CD8-positive, alpha-beta T cell (primary cell): ENCODE measurements at regions of chr17 and their contacts with region 1.

Region 1: GRCh38 chr17:4733073-4733531 is 1.9 kb downstream of the MED11 start:
- DNase-seq: peak in 1 of 9 experiments; percentile 45
- ATAC-seq: no peak
- H3K4me3 ChIP-seq: no peak overlapping the region
- H3K4me3 Mint-ChIP-seq: peak overlapping the region; percentile 39
- H3K27ac ChIP-seq: no peak overlapping the region
- H3K27ac Mint-ChIP-seq: no peak overlapping the region
- H3K4me1 ChIP-seq: peaks cover 24% of the 10 kb centered on the region
- H3K4me1 Mint-ChIP-seq: peaks cover 30% of the 10 kb centered on the region
- H3K27me3 ChIP-seq: no peaks in the 10 kb centered on the region
- H3K27me3 Mint-ChIP-seq: no peaks in the 10 kb centered on the region
- CTCF ChIP-seq: no peak

Region 2: GRCh38 chr17:4444782-4445473 is 288.2 kb before region 1 on chr17:
- CTCF ChIA-PET with region 1: no interaction called
- POLR2A ChIA-PET with region 1: no interaction called
- intact Hi-C with region 1: no loop called
- DNase-seq: no peak
- ATAC-seq: no peak
- H3K4me3 ChIP-seq: no peak overlapping the region
- H3K4me3 Mint-ChIP-seq: no peak overlapping the region
- H3K27ac ChIP-seq: no peak overlapping the region
- H3K27ac Mint-ChIP-seq: no peak overlapping the region
- H3K4me1 ChIP-seq: no peaks in the 10 kb centered on the region
- H3K4me1 Mint-ChIP-seq: no peaks in the 10 kb centered on the region
- H3K27me3 ChIP-seq: peaks cover 0 to 2% of the 10 kb centered on the region in 2 experiments
- H3K27me3 Mint-ChIP-seq: no peaks in the 10 kb centered on the region
- CTCF ChIP-seq: no peak

Region 3: DNA sequence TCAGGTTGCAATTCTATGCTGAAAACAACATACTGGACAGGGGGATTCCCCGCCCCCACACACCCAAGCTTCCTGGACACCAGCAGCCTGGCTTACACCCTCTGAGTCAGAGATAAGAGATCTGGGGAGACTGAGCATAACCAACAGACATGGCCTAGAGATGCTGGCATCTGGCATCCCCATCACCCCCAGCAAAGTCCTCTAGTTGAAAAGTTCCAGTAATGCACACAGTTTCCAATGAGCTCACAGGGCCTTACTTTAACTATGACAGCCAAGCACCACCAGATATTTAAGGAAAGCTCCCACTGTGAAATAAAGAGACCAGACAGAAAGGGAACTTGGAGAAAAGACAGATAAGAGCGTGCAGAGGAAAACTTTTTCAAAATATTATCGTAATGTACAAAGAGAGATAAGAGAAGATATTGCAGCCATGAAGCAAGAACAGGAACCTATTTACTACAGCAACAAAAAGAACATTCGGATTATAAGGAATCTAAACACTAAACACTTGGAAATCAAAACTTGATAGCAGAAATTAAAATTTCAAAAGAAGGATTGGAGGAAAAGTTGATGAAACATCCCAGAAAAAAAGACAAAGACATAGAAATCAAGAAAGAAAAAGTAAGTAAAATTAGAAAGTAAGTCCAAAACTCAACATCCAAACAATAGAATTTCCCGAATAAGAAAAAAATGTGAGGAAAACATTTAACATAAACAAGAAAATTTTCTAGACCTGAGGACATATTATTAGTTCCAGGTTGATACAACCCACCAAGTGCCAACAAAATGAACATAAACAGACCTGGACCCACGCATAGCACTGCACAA is 74.4 kb before region 1 on chr17:
- CTCF ChIA-PET with region 1: no interaction called
- POLR2A ChIA-PET with region 1: no interaction called
- intact Hi-C with region 1: no loop called
- DNase-seq: no peak
- ATAC-seq: no peak
- H3K4me3 ChIP-seq: no peak overlapping the region
- H3K4me3 Mint-ChIP-seq: no peak overlapping the region
- H3K27ac ChIP-seq: no peak overlapping the region
- H3K27ac Mint-ChIP-seq: no peak overlapping the region
- H3K4me1 ChIP-seq: no peaks in the 10 kb centered on the region
- H3K4me1 Mint-ChIP-seq: no peaks in the 10 kb centered on the region
- H3K27me3 ChIP-seq: no peaks in the 10 kb centered on the region
- H3K27me3 Mint-ChIP-seq: peaks cover 5% of the 10 kb centered on the region
- CTCF ChIP-seq: no peak

Region 4: GRCh38 chr17:4796553-4796921 is 63.4 kb after region 1 on chr17:
- CTCF ChIA-PET with region 1: interaction called, 4 read pairs
- POLR2A ChIA-PET with region 1: no interaction called
- intact Hi-C with region 1: loop called (anchors 1 kb)
- DNase-seq: peak in 2 of 9 experiments; percentile 20 to 28
- ATAC-seq: no peak
- H3K4me3 ChIP-seq: peak overlapping the region; percentile 70 to 73
- H3K4me3 Mint-ChIP-seq: peak overlapping the region; percentile 99
- H3K27ac ChIP-seq: peak overlapping the region; percentile 53 to 67
- H3K27ac Mint-ChIP-seq: peak overlapping the region; percentile 97
- H3K4me1 ChIP-seq: peaks cover 7% of the 10 kb centered on the region
- H3K4me1 Mint-ChIP-seq: peaks cover 13% of the 10 kb centered on the region
- H3K27me3 ChIP-seq: no peaks in the 10 kb centered on the region
- H3K27me3 Mint-ChIP-seq: peaks cover 2% of the 10 kb centered on the region
- CTCF ChIP-seq: no peak

Region 5: DNA sequence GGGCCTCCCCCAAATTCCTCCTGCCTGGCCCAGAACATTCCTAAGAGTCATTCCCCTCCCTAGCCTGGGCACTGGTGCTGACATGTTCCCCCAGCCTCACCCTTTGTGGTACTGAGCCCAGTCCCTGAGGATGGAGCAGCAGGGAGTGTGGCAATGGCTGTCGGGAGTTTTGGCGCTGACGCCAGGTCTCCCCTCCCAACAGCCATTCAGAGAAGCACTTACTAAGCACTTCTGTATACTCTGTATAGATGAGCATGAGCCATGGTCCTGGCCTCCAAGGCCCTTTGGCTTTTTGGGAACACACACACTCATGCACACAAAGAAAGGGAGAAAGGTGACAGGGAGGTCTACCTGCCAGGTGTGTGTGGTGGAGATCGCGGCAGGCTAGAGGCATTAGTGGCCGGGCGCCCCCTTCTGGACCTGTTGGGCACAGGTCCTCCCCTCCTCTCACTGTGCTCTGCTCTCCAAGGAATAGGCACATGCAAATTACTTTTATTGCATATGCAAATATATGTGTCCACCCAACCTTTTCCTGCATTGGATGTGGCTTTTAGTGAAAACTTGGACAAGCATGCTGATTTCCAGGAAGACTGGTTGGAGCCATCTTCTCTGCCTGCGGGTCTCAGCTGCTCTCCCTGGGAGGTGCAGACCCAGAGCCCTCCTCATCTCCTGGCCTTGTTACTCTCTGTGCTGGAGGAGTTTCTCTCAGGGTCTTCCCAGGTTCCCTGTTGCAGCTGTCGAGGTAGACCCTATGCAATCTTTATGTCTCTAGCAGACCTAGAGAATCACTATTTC is 148.9 kb after region 1 on chr17:
- CTCF ChIA-PET with region 1: interaction called, 15 read pairs
- POLR2A ChIA-PET with region 1: interaction called, 3 read pairs
- intact Hi-C with region 1: loop called (anchors 1 kb)
- DNase-seq: peak; percentile 43 to 83 (median 72)
- ATAC-seq: peak; percentile 98
- H3K4me3 ChIP-seq: no peak overlapping the region
- H3K4me3 Mint-ChIP-seq: no peak overlapping the region
- H3K27ac ChIP-seq: no peak overlapping the region
- H3K27ac Mint-ChIP-seq: no peak overlapping the region
- H3K4me1 ChIP-seq: no peaks in the 10 kb centered on the region
- H3K4me1 Mint-ChIP-seq: peaks cover 3% of the 10 kb centered on the region
- H3K27me3 ChIP-seq: no peaks in the 10 kb centered on the region
- H3K27me3 Mint-ChIP-seq: no peaks in the 10 kb centered on the region
- CTCF ChIP-seq: peak; percentile 79